Colonic mucosa (tissue), 4 donors: ENCODE measurements at regions of chr11 and their contacts with region 1.

Region 1: DNA sequence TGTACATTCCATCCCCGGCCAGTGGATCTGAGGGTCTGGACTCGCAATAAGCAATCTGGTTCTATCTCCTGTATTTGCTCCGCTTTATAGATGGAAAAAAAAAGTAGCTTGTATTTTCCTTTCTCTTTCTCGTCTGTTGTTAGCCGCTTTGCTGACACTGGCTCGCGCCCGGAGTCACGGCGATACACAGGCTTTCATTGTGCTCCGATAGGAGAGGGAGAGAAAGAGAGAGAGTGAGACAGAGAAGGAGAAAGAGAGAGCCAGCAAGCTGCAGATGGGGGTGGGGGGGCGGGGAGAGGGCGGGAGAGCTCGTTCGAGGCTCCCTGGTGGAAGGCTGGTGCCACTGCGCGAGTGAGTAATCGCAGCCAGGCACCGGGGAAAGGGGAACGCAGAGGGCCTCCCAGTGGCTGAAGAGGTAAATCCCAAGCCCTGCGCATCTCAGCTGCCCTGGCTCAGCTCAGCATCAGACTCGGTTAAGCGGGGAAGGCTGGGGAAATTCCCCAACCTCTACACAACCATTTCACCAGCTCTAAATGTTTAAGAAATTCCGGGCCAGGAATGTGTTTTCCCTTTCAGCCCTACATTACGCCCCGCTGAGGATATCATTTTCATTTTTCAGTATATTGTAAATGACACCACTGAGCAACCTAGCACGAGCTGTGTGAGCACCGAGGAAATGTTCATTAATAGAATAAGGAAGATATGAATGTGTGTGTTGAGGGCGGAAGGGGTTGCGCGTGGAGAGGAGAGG is at the start of gene MAML2:
- DNase-seq: peak; percentile 93
- H3K4me3 ChIP-seq: peak within 1 kb of the TSS; percentile 69
- H3K27ac ChIP-seq: peak within 1 kb of the TSS; percentile 79
- H3K4me1 ChIP-seq: peaks cover 18% of the 10 kb centered on the region
- H3K27me3 ChIP-seq: no peaks in the 10 kb centered on the region
- CTCF ChIP-seq: peak; percentile 94
- total RNA-seq, gene MAML2: 10.4 to 11.0 TPM

Region 2: DNA sequence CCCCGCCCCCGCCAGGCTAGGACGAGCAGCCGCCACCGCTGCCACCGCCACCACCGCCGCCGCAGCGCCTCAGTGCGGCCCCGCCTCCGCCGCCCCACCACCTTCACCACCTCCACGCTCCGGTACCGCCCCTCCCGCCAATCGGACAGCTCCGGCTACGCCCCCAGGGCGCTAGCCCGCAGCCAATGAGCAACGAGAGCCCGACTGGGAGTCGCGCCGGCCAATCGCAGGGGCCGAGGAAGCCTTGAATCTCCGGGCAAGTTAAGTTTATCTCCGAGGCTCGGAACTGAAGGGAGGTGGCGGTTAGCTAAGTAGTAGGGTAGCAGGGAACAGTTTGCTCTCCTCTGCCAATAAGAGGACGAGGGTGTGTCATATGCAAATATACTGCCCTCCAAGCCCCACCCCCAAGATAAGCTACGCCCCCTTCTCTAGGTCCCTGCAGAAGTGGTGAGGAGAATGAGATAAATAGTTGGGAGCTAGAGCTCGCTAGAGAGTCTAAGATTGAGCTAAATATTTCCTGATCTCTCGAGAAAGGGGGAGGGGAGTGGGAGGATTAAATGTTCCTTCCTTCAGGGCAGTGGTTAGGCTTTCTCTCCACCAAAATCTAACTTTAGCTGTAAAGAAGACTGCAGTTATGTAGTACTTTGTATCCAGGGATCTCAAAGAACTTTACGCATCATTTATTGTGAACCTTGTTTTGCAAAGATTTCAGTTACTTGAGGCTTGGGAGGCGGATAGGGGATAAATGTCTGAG is 1111.8 kb before region 1 on chr11 and contains the start of gene SESN3:
- intact Hi-C with region 1: loop called (anchors 10 kb)
- DNase-seq: peak; percentile 98
- H3K4me3 ChIP-seq: peak within 1 kb of the TSS; percentile 94
- H3K27ac ChIP-seq: peak within 1 kb of the TSS; percentile 76
- H3K4me1 ChIP-seq: no peaks in the 10 kb centered on the region
- H3K27me3 ChIP-seq: no peaks in the 10 kb centered on the region
- CTCF ChIP-seq: no peak
- total RNA-seq, gene SESN3: 14.7 to 21.2 TPM

Region 3: DNA sequence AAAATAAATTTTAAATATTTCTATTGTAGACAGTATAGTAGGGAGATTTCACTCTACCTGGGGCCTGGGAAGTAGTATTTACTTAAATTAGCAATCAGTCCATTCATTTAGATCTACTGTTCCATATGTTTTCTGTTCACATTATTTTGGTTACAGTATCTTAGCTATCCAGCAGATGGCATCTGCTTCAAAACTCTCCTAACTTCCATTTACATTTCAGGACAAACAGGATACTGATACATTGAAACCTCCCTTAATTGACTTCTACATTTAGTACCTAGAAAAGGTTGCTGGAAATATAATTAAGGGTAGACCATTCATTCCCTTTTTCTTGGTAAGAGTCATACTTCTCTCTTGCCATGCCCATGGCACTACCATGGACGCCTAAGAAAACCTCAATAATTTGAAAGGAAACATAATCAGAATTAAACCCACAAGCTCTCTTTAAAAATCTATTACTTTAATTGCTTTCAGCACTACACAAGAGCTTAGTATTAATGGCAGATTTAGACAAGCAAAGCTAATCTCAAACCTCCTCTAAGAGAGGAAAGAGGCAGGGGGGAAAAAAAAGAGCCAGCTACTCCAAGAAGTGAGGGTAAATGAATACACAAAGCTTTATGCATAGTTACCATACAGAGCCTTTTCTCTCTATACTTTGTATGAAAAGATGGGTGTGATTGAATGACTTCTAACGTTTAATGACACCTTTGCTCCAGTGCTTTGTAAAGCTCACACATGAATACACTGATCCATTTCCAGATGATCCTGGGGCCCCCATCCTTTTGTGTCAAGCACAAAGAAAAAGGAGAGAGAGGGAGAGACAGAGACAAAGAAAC is 288.0 kb before region 1 on chr11:
- intact Hi-C with region 1: loop called (anchors 2 kb)
- DNase-seq: no peak
- H3K4me3 ChIP-seq: no peak overlapping the region
- H3K27ac ChIP-seq: no peak overlapping the region
- H3K4me1 ChIP-seq: no peaks in the 10 kb centered on the region
- H3K27me3 ChIP-seq: no peaks in the 10 kb centered on the region
- CTCF ChIP-seq: peak; percentile 55

Region 4: GRCh38 chr11:96257972-96258934 is 84.9 kb before region 1 on chr11:
- intact Hi-C with region 1: loop called (anchors 5 kb)
- DNase-seq: no peak
- H3K4me3 ChIP-seq: no peak overlapping the region
- H3K27ac ChIP-seq: peak overlapping the region; percentile 67
- H3K4me1 ChIP-seq: peaks cover 8% of the 10 kb centered on the region
- H3K27me3 ChIP-seq: no peaks in the 10 kb centered on the region
- CTCF ChIP-seq: no peak